OCI-LY7 (cell line): ENCODE measurements at regions of chr21 and their contacts with region 1.

Region 1: DNA sequence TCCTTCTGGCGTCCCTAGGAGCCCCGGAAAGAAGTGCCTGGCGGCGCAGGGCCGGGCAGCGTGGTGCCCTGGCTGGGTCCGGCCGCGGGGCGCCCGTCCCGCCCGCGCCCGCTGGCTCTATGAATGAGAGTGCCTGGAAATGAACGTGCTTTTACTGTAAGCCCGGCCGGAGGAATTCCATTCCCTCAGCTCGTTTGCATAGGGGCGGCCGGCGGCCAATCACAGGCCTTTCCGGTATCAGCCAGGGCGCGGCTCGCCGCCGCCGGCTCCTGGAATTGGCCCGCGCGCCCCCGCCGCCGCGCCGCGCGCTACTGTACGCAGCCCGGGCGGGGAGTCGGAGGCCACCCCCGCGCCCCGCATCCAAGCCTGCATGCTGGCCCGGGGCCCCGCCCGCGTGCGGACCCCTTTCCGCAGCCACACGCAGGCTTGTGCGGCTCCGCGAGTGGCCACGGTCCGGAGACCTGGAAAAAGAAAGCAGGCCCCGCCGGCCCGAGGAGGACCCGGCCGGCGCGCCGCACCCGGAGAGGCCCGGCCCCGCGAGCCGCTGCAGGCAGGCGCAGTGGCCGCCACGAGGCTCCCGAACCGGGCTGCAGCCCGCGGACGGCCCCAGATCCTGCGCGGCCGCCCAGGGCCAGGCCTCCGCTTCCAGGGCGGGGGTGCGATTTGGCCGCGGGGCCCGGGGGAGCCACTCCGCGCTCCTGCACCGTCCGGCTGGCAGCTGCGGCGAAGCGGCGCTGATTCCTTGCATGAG is 160.4 kb downstream of the RUNX1 start:
- DNase-seq: peak; percentile 72
- H3K4me3 ChIP-seq: peak overlapping the region; percentile 81
- H3K27ac ChIP-seq: peak overlapping the region; percentile 46
- H3K4me1 ChIP-seq: peaks cover 23% of the 10 kb centered on the region
- CTCF ChIP-seq: no peak

Region 2: GRCh38 chr21:34745557-34746255 is 143.0 kb before region 1 on chr21:
- CTCF ChIA-PET with region 1: no interaction called
- POLR2A ChIA-PET with region 1: no interaction called
- intact Hi-C with region 1: loop called (anchors 5 kb)
- DNase-seq: peak; percentile 69
- H3K4me3 ChIP-seq: peak overlapping the region; percentile 12
- H3K27ac ChIP-seq: no peak overlapping the region
- H3K4me1 ChIP-seq: no peaks in the 10 kb centered on the region
- CTCF ChIP-seq: peak; percentile 93

Region 3: DNA sequence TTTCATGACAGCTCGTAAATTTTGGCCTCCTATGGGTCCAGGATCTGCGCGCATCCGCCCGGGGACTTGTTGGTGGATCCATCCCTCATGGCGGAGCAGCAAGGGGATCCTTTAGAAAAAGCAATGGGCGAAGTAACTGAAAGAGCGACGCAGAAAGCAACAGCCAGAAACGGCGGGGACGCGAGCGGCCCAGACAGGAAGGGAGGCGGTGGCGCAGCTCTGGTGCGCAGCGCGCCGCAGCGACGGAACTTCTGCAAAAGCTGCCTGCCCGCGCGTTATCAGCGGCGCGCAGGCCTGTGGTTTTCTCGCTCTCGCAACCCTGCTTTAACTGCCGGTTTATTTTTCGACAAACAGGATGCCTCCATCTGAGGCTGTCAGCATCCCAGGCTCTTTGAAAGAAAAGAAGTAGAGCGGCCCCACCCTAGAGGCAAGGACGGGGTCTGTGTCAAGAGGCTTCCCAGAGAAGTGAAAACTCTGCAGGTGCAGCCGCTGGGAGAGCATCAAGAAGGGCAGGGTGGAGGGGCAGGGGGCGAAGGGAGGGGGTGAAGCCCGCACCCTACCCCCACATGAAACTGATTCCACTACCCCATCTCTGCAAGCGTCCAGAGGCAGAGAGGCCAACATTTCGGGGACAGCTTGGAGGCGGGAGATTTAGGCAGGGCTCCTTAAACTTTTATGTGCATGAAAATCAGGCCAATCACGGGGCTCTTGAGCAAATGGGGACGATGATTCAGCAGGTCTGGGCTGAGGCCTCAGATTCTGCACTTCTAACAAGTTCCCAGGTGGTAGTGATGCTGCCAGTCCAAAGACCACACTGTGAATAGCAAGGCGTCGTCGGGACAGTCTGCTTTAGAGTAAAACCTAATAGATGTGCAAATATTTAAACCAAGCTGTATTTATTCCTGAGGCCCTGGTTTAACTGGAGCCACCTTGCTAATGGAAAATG is 138.1 kb after region 1 on chr21:
- CTCF ChIA-PET with region 1: no interaction called
- POLR2A ChIA-PET with region 1: no interaction called
- intact Hi-C with region 1: loop called (anchors 2 kb)
- DNase-seq: peak; percentile 93
- H3K4me3 ChIP-seq: peak overlapping the region; percentile 65
- H3K27ac ChIP-seq: peak overlapping the region; percentile 97
- H3K4me1 ChIP-seq: peaks cover 69% of the 10 kb centered on the region
- CTCF ChIP-seq: peak; percentile 21; the same call in 1 of the 2 replicates